ENCODE measurements at regions of chr1 and their contacts with region 1.

Region 1: GRCh38 chr1:224503161-224504118 is 68.8 kb upstream of the WDR26 start:
- DNase-seq: peak; percentile 94
- H3K4me3 ChIP-seq: no peak overlapping the region
- H3K27ac ChIP-seq: peak overlapping the region; percentile 86
- H3K4me1 ChIP-seq: peaks cover 78% of the 10 kb centered on the region
- H3K27me3 ChIP-seq: no peaks in the 10 kb centered on the region
- CTCF ChIP-seq: peak; percentile 25; the same call in 1 of the 2 replicates

Region 2: GRCh38 chr1:224430511-224431113 is 72.8 kb before region 1 on chr1:
- CTCF ChIA-PET with region 1: no interaction called
- POLR2A ChIA-PET with region 1: interaction called, 10 read pairs
- intact Hi-C with region 1: no loop called
- DNase-seq: peak; percentile 64
- H3K4me3 ChIP-seq: peak overlapping the region; percentile 10
- H3K27ac ChIP-seq: peak overlapping the region; percentile 63
- H3K4me1 ChIP-seq: peaks cover 33% of the 10 kb centered on the region
- H3K27me3 ChIP-seq: no peaks in the 10 kb centered on the region
- CTCF ChIP-seq: no peak

Region 3: DNA sequence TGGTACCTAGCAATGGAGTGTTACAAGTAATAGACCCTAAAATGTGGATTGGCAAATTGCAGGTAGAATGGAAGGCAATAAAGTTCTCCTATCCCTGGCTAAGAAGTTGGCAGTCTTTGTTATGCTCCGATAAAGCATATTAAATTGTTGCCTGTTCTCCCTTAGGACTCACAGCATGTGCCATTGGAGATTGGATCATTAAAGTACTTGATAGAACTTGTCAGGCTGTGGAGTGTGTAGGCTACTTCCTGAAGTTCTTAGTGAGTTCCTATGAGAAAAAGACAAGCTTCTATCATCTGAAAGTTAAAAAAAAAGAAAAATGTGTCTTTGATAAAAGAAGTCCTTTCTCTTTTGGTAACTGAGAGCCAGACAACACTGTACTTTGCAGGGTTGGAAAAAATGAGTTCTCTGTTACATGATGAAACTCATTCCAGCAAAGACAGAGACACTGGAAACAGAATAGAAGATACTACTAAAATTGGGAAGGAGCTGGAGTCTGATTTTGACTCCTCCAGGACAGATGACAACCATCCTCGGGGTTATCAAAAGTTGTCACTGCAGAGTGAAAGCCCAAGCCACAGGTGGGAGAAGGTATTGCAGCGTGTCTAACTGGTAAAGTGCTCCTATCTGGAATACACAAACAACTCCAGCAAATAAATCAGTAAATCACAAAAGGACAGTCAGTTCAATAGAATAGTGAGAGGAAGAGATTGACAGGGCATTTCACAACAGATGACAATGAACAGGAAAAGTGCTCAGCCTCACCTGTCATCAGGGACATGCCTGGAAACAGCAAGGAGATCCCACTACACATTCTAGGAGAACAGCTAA is 18.7 kb after region 1 on chr1:
- CTCF ChIA-PET with region 1: no interaction called
- POLR2A ChIA-PET with region 1: no interaction called
- intact Hi-C with region 1: loop called (anchors 2 kb)
- DNase-seq: no peak
- H3K4me3 ChIP-seq: no peak overlapping the region
- H3K27ac ChIP-seq: no peak overlapping the region
- H3K4me1 ChIP-seq: peaks cover 14% of the 10 kb centered on the region
- H3K27me3 ChIP-seq: no peaks in the 10 kb centered on the region
- CTCF ChIP-seq: no peak

Region 4: GRCh38 chr1:224644553-224645154 is 141.2 kb after region 1 on chr1:
- CTCF ChIA-PET with region 1: no interaction called
- POLR2A ChIA-PET with region 1: no interaction called
- intact Hi-C with region 1: loop called (anchors 5 kb)
- DNase-seq: peak; percentile 70
- H3K4me3 ChIP-seq: no peak overlapping the region
- H3K27ac ChIP-seq: no peak overlapping the region
- H3K4me1 ChIP-seq: no peaks in the 10 kb centered on the region
- H3K27me3 ChIP-seq: no peaks in the 10 kb centered on the region
- CTCF ChIP-seq: peak; percentile 92

Region 5: GRCh38 chr1:224906340-224906739 is 402.9 kb after region 1 on chr1:
- CTCF ChIA-PET with region 1: no interaction called
- POLR2A ChIA-PET with region 1: no interaction called
- intact Hi-C with region 1: loop called (anchors 5 kb)
- DNase-seq: no peak
- H3K4me3 ChIP-seq: no peak overlapping the region
- H3K27ac ChIP-seq: no peak overlapping the region
- H3K4me1 ChIP-seq: no peaks in the 10 kb centered on the region
- H3K27me3 ChIP-seq: peaks cover 27% of the 10 kb centered on the region
- CTCF ChIP-seq: no peak

Region 6: GRCh38 chr1:224922404-224923164 is 419.1 kb after region 1 on chr1:
- CTCF ChIA-PET with region 1: interaction called, 4 read pairs
- POLR2A ChIA-PET with region 1: no interaction called
- intact Hi-C with region 1: loop called (anchors 5 kb)
- DNase-seq: peak; percentile 47
- H3K4me3 ChIP-seq: no peak overlapping the region
- H3K27ac ChIP-seq: no peak overlapping the region
- H3K4me1 ChIP-seq: no peaks in the 10 kb centered on the region
- H3K27me3 ChIP-seq: no peaks in the 10 kb centered on the region
- CTCF ChIP-seq: peak; percentile 71

Measured in A673 (cell line).